HEK293 (cell line): ENCODE measurements at regions of chr3 and their contacts with region 1.

Region 1: DNA sequence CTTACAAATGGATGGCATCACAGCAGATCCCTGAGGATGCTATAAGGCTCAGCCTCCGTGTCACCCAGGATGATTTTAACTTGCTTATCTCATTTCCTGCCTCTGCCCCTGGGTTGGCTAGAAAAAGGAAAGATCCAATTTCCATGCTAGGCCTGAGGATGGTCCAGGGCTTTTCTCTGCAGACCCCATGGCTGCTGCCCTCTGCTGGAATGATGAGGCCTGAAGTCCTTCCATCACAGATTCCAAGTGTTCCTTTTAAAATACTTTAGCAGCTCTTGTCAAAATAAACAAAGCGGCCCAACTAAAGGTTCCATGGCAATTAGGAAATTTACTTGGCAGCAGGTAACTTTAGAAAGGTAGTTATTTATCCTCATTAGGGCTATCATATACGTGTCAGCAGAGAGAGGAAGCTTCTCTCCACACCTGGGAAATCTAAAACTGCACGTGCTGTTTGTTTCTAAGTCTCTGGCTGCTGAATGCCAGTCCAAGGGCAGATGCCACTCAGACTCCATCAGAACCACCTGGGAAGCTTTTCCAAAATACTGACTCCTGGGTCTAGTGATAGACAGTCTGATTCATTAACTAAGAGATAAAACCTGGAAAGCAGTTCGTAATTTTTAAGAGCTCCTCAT is 401.9 kb upstream of the IL12A start:
- H3K4me3 ChIP-seq: no peak overlapping the region
- H3K27ac ChIP-seq: no peak overlapping the region
- H3K4me1 ChIP-seq: no peaks in the 10 kb centered on the region
- CTCF ChIP-seq: no peak

Region 2: DNA sequence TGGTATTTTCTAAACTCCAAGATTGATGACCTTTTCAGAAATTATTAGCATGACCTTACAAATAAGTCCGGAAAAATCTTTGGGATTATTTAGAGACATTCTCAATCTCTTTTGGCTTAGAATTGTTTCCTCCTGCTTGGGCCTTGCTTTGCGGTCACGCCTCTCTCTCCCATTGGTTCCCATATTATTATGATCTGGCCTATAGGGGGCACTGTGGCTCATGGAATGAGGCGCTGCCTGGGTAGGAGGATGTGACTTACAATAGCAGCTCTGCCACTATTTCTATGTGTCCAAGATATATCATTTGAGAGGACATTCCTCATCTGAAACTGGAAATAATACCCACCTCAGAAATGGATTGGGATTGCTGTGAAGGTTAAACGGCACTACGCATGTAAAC is 319.9 kb before region 1 on chr3:
- CTCF ChIA-PET with region 1: interaction called, 21 read pairs
- POLR2A ChIA-PET with region 1: no interaction called
- H3K4me3 ChIP-seq: no peak overlapping the region
- H3K27ac ChIP-seq: no peak overlapping the region
- H3K4me1 ChIP-seq: no peaks in the 10 kb centered on the region; the same call in 1 of the 2 replicates
- CTCF ChIP-seq: no peak